Tibial artery (tissue), 4 donors: ENCODE measurements at regions of chr1 and their contacts with region 1.

Region 1: GRCh38 chr1:200279810-200280411 is 129.9 kb downstream of the ZNF281 start:
- DNase-seq: peak in 1 of 2 donors; percentile 28
- H3K4me3 ChIP-seq: no peak overlapping the region
- H3K27ac ChIP-seq: no peak overlapping the region
- H3K4me1 ChIP-seq: no peaks in the 10 kb centered on the region
- H3K27me3 ChIP-seq: peaks cover 0 to 3% of the 10 kb centered on the region in 2 donors
- CTCF ChIP-seq: peak; percentile 50 to 56

Region 2: DNA sequence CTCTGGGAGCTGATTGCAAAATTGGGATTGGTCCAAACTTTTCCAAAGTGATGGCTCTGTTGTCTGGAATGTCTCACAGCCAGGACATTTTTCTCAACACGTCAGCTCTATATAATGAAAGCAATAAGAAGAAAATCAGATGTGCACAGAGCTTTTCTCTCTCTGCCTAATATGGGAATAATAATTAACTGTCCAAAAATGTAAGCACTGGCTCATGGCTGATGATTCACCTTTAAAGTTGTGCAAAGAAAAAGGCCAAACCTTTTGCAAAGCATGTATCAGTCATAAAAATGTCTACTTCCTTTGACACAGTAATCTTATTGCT is 99.5 kb after region 1 on chr1:
- intact Hi-C with region 1: no loop called
- DNase-seq: no peak
- H3K4me3 ChIP-seq: no peak overlapping the region
- H3K27ac ChIP-seq: no peak overlapping the region
- H3K4me1 ChIP-seq: peaks cover 0 to 6% (median 0%) of the 10 kb centered on the region in 4 donors
- H3K27me3 ChIP-seq: no peaks in the 10 kb centered on the region
- CTCF ChIP-seq: no peak

Region 3: DNA sequence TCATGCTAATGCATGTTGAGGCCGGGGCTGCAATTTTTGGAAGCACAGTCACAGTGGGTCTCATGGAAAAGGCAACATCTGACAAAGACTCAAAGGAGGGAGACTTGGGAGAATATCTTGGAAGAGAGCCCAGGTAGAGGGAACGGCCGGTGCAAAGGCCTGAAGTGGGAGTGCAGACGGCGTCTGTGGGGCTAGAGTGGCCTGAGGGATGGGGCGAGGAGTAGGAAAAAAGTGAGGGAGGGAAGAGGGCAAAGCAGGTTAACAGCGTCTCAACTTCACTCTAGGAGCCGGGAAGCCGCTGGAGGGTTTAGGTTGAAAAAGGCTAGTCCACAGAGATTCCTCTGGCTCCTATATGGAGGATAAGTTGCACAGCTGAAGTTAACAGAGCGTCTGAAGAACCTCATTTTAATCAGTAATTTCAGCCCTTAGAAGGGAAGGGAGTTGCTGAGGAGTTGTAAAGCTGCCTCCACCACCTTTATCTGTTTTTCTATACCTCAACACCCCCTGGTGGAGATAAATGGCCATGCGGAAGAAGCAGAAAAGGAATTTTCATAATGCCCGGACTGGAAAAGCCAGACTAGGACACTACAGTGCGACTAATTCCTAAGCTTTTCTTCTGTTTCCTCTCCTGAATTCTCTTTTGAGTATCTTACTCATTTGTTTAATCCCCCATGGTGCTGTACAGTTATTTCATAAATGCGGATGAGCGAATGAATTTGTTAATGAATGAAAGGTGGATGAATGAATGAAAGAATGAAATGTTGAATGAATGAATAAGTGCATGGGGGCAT is 208.7 kb after region 1 on chr1:
- intact Hi-C with region 1: loop called (anchors 10 kb)
- DNase-seq: peak in 1 of 2 donors; percentile 43
- H3K4me3 ChIP-seq: no peak overlapping the region
- H3K27ac ChIP-seq: no peak overlapping the region
- H3K4me1 ChIP-seq: peaks cover 0 to 5% (median 0%) of the 10 kb centered on the region in 4 donors
- H3K27me3 ChIP-seq: peaks cover 0 to 11% of the 10 kb centered on the region in 2 donors
- CTCF ChIP-seq: peak; percentile 72 to 78